Activated CD4-positive, alpha-beta memory T cell treated with anti-CD3 and anti-CD28 coated beads for 36 hours (primary cell): ENCODE measurements at regions of chr10 and their contacts with region 1.

Region 1: DNA sequence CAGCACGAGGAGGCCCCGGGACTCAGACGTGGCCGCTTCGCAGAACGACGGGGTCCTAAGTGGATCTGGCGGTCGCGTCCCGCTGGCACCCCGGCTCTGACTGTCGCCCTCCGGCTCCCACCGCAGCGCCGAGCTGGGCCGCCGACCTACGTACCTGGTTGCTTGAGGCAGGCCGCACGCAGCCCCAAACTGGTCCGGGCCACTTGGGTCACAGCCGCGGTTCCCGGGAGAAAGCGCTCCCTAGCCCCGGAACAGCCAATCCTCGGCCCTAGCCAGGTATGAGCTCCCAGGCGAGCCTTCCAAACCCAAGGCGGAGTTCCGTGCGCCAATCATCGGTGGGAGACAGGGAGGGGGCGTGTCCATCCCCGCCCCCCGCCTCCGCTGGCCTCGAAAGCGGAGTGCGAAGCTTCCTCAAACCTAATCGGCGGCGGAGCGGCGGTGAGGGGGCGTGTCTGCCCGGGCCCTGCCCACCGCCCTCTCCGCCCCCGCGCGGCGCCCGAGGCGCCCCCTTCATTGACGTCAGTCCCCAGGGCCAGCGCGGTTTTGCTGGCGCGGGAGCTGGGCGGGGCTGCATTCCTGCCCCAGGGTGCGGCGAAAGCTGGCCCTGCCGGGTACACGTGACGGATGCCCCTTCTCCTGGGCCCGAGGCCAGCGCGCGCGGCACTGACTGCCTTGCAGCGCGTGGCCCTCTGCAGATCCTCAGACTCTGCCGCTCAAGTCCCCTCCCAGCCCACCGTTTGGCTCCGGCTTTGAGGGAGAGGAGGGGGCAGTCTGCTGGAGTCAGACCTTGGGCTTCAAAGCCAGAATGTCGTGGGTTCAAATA is at the start of gene AVPI1:
- DNase-seq: peak; percentile 96
- H3K4me3 Mint-ChIP-seq: peak within 1 kb of the TSS; percentile 77
- H3K27ac Mint-ChIP-seq: peak within 1 kb of the TSS; percentile 4
- H3K4me1 Mint-ChIP-seq: peaks cover 14% of the 10 kb centered on the region
- H3K27me3 Mint-ChIP-seq: no peaks in the 10 kb centered on the region
- total RNA-seq, gene AVPI1: 1.7 to 2.1 TPM

Region 2: DNA sequence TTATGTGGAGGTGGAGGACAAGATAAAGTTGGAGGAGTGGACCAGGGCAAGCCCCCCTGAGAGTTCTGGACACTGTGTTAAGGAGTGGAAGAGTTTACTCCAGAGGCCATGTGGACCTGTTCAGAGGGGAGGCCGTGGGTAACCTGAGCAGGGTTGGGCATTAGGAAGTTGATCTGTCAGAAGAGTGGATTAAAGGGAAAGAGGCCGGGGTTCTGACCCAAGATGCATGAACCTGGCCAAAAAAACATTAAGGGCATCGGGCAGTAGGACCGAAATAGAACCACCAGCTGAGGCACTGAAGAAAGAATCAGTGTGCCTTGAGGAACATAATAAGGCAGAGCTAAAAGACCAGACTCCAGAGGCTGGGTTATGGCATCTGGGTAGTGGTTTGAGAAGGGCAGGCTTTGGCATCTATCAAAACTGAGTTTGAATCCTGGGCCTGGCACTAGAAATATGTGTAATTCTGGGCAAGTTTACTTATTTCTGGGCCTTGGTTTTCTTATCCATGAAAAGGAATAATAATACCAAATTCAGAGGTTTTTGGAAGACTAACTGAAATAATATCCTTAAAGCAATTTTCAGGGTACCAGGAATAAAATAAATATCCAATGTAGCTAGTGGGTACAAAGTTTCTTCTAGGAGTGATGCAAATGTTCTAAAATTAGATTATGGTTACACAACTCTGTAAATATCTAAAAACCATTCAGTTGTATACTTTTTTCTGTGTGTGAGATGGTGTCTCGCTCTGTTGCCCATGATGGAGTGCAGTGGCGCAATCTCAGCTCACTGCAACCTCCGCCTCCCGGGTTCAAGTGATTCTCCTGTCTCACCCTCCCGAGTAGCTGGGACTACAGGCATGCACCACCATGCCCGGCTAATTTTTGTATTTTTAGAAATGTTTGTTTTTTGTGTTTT is 379.1 kb before region 1 on chr10:
- CTCF ChIA-PET with region 1: no interaction called
- POLR2A ChIA-PET with region 1: no interaction called
- intact Hi-C with region 1: no loop called
- DNase-seq: no peak
- H3K4me3 Mint-ChIP-seq: no peak overlapping the region
- H3K27ac Mint-ChIP-seq: no peak overlapping the region
- H3K4me1 Mint-ChIP-seq: no peaks in the 10 kb centered on the region
- H3K27me3 Mint-ChIP-seq: no peaks in the 10 kb centered on the region

Region 3: DNA sequence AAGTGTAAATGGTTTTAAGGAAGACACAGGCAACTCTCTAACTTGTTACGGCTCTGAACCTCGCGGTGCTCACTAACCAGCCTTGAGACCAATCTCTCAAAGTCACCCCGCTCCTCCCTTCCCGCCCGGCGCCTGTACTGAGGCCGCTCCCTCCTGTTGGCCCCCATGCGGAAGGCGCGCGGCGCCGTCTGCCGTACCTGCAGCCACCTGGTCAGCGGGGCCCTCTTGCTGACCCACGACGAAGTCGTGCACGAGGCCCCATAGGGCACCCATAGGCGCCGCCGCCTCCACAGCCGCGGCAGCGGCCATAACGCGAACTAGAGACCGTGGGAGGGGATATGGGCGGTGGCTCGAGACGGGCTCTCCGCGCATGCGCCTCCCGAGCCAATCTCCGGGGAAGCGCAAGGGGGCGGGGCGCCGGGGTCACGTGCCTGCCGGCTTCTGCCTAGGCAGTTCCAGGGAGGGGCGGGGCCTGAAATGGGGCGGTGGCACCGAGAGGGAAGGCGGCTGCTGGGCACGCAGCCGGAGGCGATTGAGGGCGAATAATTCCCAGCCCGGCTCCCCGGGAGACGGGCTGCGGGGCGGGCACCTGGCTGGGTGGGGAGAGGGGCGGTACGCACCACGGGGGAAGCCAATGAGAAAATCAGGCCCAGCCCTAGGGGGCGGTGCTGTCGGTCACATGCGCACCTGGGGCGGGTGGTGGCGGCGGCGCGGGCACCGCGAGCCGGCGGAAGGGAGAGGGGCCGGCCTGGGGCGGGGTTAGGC is 188.9 kb before region 1 on chr10 and contains the start of gene MMS19:
- CTCF ChIA-PET with region 1: no interaction called
- POLR2A ChIA-PET with region 1: no interaction called
- intact Hi-C with region 1: loop called (anchors 1 kb)
- DNase-seq: peak; percentile 99
- H3K4me3 Mint-ChIP-seq: peak within 1 kb of the TSS; percentile 98
- H3K27ac Mint-ChIP-seq: peak within 1 kb of the TSS; percentile 97
- H3K4me1 Mint-ChIP-seq: peaks cover 33% of the 10 kb centered on the region
- H3K27me3 Mint-ChIP-seq: peaks cover 23% of the 10 kb centered on the region
- total RNA-seq, gene MMS19: 84.7 to 86.8 TPM

Region 4: GRCh38 chr10:97676770-97677581 is 10.2 kb before region 1 on chr10:
- CTCF ChIA-PET with region 1: interaction called, 51 read pairs
- POLR2A ChIA-PET with region 1: interaction called, 3 read pairs
- intact Hi-C with region 1: no loop called
- DNase-seq: peak; percentile 51
- H3K4me3 Mint-ChIP-seq: no peak overlapping the region
- H3K27ac Mint-ChIP-seq: no peak overlapping the region
- H3K4me1 Mint-ChIP-seq: peaks cover 6% of the 10 kb centered on the region
- H3K27me3 Mint-ChIP-seq: no peaks in the 10 kb centered on the region

Region 5: GRCh38 chr10:97714048-97714371 is 26.8 kb after region 1 on chr10:
- CTCF ChIA-PET with region 1: interaction called, 20 read pairs
- POLR2A ChIA-PET with region 1: interaction called, 5 read pairs
- intact Hi-C with region 1: no loop called
- DNase-seq: peak; percentile 69
- H3K4me3 Mint-ChIP-seq: peak overlapping the region; percentile 97
- H3K27ac Mint-ChIP-seq: peak overlapping the region; percentile 82
- H3K4me1 Mint-ChIP-seq: peaks cover 7% of the 10 kb centered on the region
- H3K27me3 Mint-ChIP-seq: peaks cover 5% of the 10 kb centered on the region

Region 6: GRCh38 chr10:97736902-97737769 is 50.0 kb after region 1 on chr10 and contains the start of gene ZFYVE27:
- CTCF ChIA-PET with region 1: interaction called, 28 read pairs
- POLR2A ChIA-PET with region 1: interaction called, 12 read pairs
- intact Hi-C with region 1: loop called (anchors 1 kb)
- DNase-seq: peak; percentile 98
- H3K4me3 Mint-ChIP-seq: peak within 1 kb of the TSS; percentile 95
- H3K27ac Mint-ChIP-seq: peak within 1 kb of the TSS; percentile 89
- H3K4me1 Mint-ChIP-seq: peaks cover 41% of the 10 kb centered on the region
- H3K27me3 Mint-ChIP-seq: no peaks in the 10 kb centered on the region
- total RNA-seq, gene ZFYVE27: 20.9 to 22.8 TPM